AG04449 (cell line): ENCODE measurements at regions of chr2 and their contacts with region 1.

Region 1: DNA sequence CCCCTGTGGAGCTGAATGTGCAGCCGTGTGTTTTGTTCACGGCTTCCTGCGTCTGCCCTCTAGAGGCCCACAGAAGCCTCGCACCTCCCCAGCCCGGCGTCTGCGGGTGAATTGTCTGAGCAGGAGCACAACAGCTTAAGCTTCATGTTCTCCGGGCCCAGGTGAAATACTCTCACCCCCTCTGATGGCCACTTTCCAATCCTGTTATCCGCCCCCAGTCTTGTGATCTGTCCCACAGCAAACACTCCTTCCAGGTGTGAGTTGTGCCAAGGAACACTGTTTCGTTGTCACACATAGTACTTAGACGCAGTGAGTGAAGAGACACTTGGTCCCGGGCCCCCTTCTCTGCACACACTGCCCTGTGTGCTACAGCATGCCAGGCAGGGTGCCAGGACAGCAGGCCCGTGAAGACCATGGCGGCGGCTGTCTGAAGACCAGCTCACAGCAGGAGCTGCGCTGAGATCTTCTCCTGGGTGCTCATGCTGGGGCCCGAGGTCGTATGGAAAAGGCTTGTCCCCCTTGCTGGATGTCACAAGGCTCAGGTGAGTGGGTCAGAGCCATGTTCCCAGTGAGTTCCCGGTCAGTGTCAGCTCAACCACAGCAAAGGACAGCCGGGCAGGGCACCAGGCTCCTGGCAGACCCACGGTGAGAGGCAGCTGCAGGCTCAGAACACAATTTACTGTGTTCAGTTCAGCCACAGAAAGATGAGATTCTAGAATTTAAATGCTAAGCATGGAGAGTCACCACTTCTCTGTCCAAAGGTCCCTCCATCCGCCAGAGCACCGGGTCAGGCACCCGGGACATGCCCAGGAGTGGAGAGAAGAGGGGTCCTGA is 6.8 kb upstream of the PXDN start:
- DNase-seq: no peak
- H3K4me3 ChIP-seq: no peak overlapping the region
- CTCF ChIP-seq: peak; percentile 96

Region 2: GRCh38 chr2:1572638-1573037 is 178.5 kb before region 1 on chr2:
- CTCF ChIA-PET with region 1: no interaction called
- POLR2A ChIA-PET with region 1: no interaction called
- DNase-seq: no peak
- H3K4me3 ChIP-seq: no peak overlapping the region
- CTCF ChIP-seq: no peak

Region 3: GRCh38 chr2:1645761-1646476 is 105.2 kb before region 1 on chr2:
- CTCF ChIA-PET with region 1: interaction called, 11 read pairs
- POLR2A ChIA-PET with region 1: no interaction called
- DNase-seq: no peak
- H3K4me3 ChIP-seq: no peak overlapping the region
- CTCF ChIP-seq: no peak

Region 4: GRCh38 chr2:1685957-1686784 is 65.0 kb before region 1 on chr2:
- CTCF ChIA-PET with region 1: interaction called, 12 read pairs
- POLR2A ChIA-PET with region 1: no interaction called
- DNase-seq: no peak
- H3K4me3 ChIP-seq: no peak overlapping the region
- CTCF ChIP-seq: no peak

Region 5: DNA sequence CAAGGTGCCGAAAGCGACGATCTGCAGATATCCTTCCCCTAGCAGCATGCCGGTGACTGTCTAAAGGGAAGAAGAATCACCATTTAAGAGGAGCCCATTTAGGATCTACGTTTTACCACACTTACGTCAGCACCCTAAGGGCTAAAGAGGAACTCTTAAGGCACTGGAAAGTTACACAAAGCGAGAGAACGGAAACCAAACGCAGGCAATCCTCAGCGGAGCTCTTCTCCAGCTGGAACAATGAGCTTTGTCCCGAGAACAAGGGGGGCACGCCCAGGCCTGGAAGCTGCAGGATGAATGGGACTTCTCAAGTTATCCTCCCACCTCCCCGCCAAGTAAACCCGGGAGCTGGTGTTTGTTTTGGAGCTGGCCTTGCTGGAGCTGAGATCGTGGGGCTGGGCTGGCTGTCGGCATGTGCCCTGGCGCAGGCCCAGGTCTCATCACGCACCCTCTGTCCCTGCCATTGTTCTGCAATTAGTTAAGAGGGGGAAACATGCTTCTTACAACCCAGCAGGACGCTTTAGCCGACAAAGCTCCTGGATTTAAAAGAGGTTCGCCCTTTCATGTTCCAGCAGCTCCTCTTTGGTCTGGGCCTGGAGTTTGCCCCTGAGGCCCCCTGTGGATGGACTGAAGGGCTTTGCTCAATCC is 43.3 kb before region 1 on chr2:
- CTCF ChIA-PET with region 1: interaction called, 13 read pairs
- POLR2A ChIA-PET with region 1: interaction called, 3 read pairs
- DNase-seq: no peak
- H3K4me3 ChIP-seq: peak overlapping the region; percentile 23
- CTCF ChIP-seq: no peak

Region 6: GRCh38 chr2:1769703-1770422 is 18.7 kb after region 1 on chr2:
- CTCF ChIA-PET with region 1: interaction called, 110 read pairs
- POLR2A ChIA-PET with region 1: no interaction called
- DNase-seq: no peak
- H3K4me3 ChIP-seq: no peak overlapping the region
- CTCF ChIP-seq: peak; percentile 77

Region 7: DNA sequence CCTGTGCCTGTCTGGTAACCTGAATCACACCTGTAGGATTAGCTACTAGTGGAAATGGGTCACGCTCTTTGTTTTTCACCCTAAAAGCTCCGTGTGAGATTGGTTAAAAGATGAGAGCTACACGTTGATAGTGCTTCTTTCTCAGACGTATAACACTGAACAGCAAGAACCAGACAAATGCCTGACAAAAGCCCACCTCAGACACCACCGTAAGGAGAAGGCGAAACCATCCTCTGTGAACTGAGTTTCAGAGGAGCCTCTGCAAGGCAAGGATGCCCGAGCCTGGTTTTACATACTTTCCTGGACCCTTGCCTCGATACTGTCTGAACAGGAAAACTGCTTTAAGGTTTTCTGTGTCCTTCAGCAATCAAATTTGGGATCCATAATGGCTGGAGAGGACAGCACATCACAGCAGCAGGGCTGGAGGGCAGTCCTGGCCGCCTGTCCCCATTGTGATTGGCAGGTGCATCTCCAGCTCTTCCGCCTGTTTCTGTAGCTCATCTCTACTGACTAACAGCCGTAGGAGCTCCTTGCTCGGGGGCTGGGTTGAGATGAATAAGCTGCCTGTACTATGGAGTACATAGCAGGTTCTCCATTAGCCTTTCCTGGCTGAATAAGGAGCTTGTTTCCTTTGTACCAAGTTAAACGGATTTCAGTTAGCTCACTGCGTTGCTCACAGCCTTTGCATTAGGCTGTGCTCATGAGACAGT is 424.4 kb after region 1 on chr2:
- CTCF ChIA-PET with region 1: no interaction called
- POLR2A ChIA-PET with region 1: no interaction called
- DNase-seq: no peak
- H3K4me3 ChIP-seq: no peak overlapping the region
- CTCF ChIP-seq: no peak